Esophagus muscularis mucosa (tissue), 4 donors: ENCODE measurements at regions of chr1 and their contacts with region 1.

Region 1: GRCh38 chr1:84690397-84691121 is at the start of gene SSX2IP:
- DNase-seq: peak; percentile 99
- H3K4me3 ChIP-seq: peak within 1 kb of the TSS; percentile 88 to 93 (median 90)
- H3K27ac ChIP-seq: peak within 1 kb of the TSS; percentile 88 to 95 (median 92)
- H3K4me1 ChIP-seq: peaks cover 9 to 35% (median 23%) of the 10 kb centered on the region in 4 donors
- H3K27me3 ChIP-seq: no peaks in the 10 kb centered on the region
- CTCF ChIP-seq: no peak
- EP300 ChIP-seq: no peak
- POLR2A ChIP-seq: no peak
- total RNA-seq, gene SSX2IP: 9.6 to 13.7 (median 9.7) TPM

Region 2: DNA sequence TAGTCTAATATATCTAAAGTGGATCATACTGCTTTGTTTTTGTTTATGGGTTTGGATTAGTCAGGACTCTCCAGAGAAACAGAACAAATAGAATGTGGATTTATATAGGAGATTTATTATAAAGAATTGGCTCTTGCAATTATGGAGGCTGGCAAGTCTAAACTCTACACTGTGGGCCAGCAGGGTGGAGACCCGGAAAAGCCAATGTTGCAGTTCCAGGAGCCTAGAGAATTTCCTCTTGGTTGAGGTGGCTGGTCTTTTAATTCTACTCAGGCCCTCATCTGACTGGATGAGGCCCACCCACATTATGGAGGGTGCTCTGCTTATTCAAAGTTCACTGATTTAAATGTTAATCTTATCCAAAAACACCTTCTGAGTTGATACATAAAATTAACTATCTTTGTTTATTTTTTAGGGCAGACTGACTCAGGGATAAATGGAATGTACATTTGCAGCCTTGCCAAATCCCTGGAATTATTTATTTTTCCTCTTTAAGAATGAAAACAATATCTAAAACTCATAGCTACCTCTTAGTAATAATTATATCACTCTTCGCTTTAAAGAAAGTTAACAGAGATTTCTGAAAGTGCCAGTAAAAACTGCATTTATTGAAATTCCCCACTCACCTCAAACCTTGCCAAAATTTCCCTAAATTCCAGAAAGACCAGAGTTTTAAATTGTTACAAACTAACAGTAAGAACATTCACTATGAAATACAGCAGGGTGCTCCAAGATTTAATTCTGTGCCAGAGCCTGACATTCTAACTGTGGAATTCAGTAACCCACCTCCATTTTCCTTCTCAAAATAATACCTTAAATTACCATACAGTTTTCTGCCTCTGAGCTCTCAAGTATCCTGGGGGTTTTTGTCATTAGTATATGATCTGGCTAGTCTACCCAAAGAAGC is 36.3 kb after region 1 on chr1:
- intact Hi-C with region 1: loop called (anchors 5 kb)
- DNase-seq: no peak
- H3K4me3 ChIP-seq: no peak overlapping the region
- H3K27ac ChIP-seq: peak overlapping the region in 1 of 4 donors; percentile 17
- H3K4me1 ChIP-seq: peaks cover 0 to 20% (median 15%) of the 10 kb centered on the region in 4 donors
- H3K27me3 ChIP-seq: no peaks in the 10 kb centered on the region
- CTCF ChIP-seq: no peak
- EP300 ChIP-seq: no peak
- POLR2A ChIP-seq: no peak

Region 3: DNA sequence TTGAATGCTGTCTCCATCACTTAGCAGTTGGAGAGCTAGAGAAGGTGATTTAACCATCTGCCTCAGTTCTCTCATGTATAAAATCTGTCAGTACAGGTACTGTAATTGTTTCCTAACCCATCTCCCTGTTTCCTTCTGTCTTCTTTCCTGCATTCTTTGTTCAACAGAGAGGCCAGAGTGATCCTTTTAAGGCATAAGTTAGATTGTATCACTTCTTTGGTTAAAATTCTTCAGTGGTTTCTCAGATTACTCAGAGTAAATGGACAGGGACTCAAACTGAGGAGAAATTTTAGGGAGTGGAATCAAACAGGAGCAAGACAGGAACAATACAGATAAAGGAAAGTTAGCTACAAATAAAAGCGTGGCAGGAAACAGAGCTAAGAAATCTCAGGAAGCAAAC is 44.9 kb after region 1 on chr1:
- intact Hi-C with region 1: loop called (anchors 5 kb)
- DNase-seq: no peak
- H3K4me3 ChIP-seq: no peak overlapping the region
- H3K27ac ChIP-seq: no peak overlapping the region
- H3K4me1 ChIP-seq: no peaks in the 10 kb centered on the region
- H3K27me3 ChIP-seq: no peaks in the 10 kb centered on the region
- CTCF ChIP-seq: no peak
- EP300 ChIP-seq: no peak
- POLR2A ChIP-seq: no peak